Activated T-helper 1 cell treated with anti-CD3 and anti-CD28 coated beads, Interleukin-12 subunit alpha, Interleukin-12 subunit beta, Interleukin-2, Interleukin-4 antibody, amounts not matched to agents 30 ng/mL and 10 ng/mL and 1 ng/mL, durations not matched to agents 14 hours and 24 hours and 36 hours (primary cell): ENCODE measurements at regions of chr1 and their contacts with region 1.

Region 1: GRCh38 chr1:116168277-116169097 is 57.3 kb downstream of the MAB21L3 start:
- DNase-seq: peak; percentile 76
- H3K4me3 Mint-ChIP-seq: peak overlapping the region; percentile 82
- H3K27ac Mint-ChIP-seq: no peak overlapping the region
- H3K4me1 Mint-ChIP-seq: peaks cover 12% of the 10 kb centered on the region
- H3K27me3 Mint-ChIP-seq: peaks cover 8% of the 10 kb centered on the region

Region 2: GRCh38 chr1:116139592-116140134 is 28.8 kb before region 1 on chr1:
- intact Hi-C with region 1: loop called (anchors 1 kb)
- DNase-seq: no peak
- H3K4me3 Mint-ChIP-seq: no peak overlapping the region
- H3K27ac Mint-ChIP-seq: no peak overlapping the region
- H3K4me1 Mint-ChIP-seq: peaks cover 12% of the 10 kb centered on the region
- H3K27me3 Mint-ChIP-seq: peaks cover 6% of the 10 kb centered on the region

Region 3: GRCh38 chr1:116232989-116233514 is 64.6 kb after region 1 on chr1:
- intact Hi-C with region 1: no loop called
- DNase-seq: no peak
- H3K4me3 Mint-ChIP-seq: no peak overlapping the region
- H3K27ac Mint-ChIP-seq: no peak overlapping the region
- H3K4me1 Mint-ChIP-seq: peaks cover 11% of the 10 kb centered on the region
- H3K27me3 Mint-ChIP-seq: peaks cover 5% of the 10 kb centered on the region

Region 4: GRCh38 chr1:116418091-116418830 is 249.8 kb after region 1 on chr1:
- intact Hi-C with region 1: loop called (anchors 5 kb)
- DNase-seq: peak; percentile 84
- H3K4me3 Mint-ChIP-seq: peak overlapping the region; percentile 90
- H3K27ac Mint-ChIP-seq: peak overlapping the region; percentile 83
- H3K4me1 Mint-ChIP-seq: peaks cover 60% of the 10 kb centered on the region
- H3K27me3 Mint-ChIP-seq: peaks cover 6% of the 10 kb centered on the region

Region 5: DNA sequence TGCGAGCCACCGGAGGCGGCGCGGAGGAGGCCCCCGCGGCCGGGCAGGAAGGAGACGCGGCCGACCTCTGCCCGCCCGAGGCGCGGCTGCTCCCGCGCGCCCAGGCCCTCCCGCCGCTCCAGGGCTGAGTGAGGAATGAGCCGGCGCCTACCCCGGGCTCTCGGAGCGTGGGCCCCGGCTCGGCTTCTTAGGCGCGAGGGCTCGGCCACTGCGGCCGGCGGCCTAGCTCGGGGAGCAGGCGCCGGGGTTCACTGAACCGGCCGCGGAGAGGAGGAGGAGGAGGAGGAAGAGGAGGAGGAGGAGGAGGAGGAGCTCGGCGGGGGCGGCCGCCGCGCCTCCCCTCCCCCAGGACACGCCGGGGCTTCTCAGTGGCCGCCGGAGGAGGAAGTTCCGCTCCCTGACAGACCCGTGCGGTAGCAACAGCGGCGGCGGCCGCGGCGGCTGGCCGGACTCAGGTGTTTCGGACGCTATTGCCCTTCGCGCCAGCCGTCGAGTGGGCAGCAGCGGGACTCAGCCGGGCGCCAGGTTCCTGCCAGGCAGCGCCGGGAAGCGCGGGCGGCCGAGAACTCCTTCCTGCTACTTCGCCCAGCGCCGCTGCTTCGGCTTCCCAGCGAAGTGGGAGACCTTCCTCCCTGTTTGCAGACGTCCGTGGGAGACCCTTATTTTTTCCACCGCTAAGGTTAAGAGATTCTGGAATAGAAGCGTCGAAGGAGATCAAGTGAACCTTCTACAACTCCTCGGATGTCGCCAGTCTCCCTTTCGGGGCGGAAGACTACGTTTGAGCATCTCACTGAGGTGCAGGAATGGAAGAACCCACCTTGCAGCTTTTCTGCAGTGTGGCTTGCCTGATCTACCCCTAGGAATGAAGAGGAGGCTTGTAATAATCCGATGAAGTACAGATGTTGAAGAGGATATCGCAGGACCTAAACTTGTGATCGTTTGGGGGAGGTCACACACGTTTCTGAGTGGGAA is 1198.8 kb after region 1 on chr1 and contains the start of gene MAN1A2:
- intact Hi-C with region 1: loop called (anchors 5 kb)
- DNase-seq: peak; percentile 74
- H3K4me3 Mint-ChIP-seq: peak within 1 kb of the TSS; percentile 97
- H3K27ac Mint-ChIP-seq: peak within 1 kb of the TSS; percentile 88
- H3K4me1 Mint-ChIP-seq: peaks cover 60% of the 10 kb centered on the region
- H3K27me3 Mint-ChIP-seq: no peaks in the 10 kb centered on the region
- total RNA-seq, gene MAN1A2: 30.1 and 32.5 TPM in 2 replicates